Endothelial cell of umbilical vein (primary cell): ENCODE measurements at regions of chr1 and their contacts with region 1.

Region 1: DNA sequence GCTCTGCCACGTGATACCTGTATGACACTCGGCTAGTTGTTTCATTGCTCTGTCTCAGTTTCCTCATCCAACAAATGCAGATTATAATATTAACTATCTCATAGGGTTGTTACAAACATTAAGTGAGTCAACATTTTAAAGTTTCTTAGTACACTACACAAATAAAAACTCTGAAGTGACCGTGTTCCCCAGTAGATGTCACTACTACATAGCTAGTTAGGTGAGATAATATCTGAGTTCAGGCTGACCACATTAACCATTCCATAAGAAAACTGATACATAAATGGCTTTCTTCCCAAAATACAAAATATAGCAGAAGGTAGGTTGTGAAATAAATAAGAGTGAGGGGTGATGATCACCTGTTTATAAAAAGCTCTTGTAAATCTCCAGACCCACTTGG is 214.1 kb downstream of the NUF2 start:
- DNase-seq: peak; percentile 30
- H3K4me3 ChIP-seq: no peak overlapping the region
- H3K27ac ChIP-seq: no peak overlapping the region
- H3K4me1 ChIP-seq: no peaks in the 10 kb centered on the region
- H3K27me3 ChIP-seq: peaks cover 0 to 3% of the 10 kb centered on the region in 2 experiments
- CTCF ChIP-seq: no peak
- POLR2A ChIP-seq: no peak

Region 2: GRCh38 chr1:162847839-162848453 is 687.9 kb before region 1 on chr1:
- CTCF ChIA-PET with region 1: no interaction called
- POLR2A ChIA-PET with region 1: no interaction called
- dilution Hi-C with region 1: no loop called
- intact Hi-C with region 1: loop called (anchors 10 kb)
- DNase-seq: peak; percentile 78
- H3K4me3 ChIP-seq: no peak overlapping the region
- H3K27ac ChIP-seq: no peak overlapping the region
- H3K4me1 ChIP-seq: no peaks in the 10 kb centered on the region
- H3K27me3 ChIP-seq: no peaks in the 10 kb centered on the region
- CTCF ChIP-seq: peak; percentile 78 to 82
- POLR2A ChIP-seq: no peak

Region 3: DNA sequence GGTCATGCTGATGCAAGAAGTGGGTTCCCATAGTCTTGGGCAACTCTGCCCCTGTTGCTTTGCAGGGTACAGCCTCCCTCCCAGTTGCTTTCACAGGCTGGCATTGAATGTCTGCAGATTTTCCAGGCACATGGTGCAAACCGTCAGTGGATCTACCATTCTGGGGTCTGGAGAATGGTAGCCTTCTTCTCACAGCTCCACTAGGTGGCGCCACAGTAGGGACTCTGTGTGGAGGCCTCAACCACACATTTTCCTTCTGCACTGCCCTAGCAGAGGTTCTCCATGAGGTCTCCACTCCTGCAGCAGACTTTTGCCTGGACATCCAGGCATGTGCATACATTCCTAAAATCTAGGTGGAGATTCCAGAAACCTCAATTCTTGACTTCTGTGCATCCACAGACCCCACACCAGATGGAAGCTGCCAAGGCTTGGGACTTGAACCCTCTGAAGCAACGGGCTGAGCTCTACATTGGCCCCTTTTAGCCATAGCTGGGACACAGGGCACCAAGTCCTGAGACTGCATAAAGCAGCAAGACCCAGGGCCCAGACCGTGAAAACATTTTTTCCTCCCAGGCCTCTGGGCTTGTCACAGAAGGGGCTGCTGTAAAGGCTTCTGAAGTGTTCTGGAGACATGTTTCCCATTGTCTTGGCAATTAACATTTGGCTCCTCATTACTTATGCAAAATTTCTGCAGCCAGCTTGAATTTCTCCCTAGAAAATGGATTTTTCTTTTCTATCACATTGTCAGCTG is 557.0 kb after region 1 on chr1:
- CTCF ChIA-PET with region 1: no interaction called
- POLR2A ChIA-PET with region 1: no interaction called
- dilution Hi-C with region 1: no loop called
- intact Hi-C with region 1: loop called (anchors 10 kb)
- DNase-seq: no peak
- H3K4me3 ChIP-seq: no peak overlapping the region
- H3K27ac ChIP-seq: no peak overlapping the region
- H3K4me1 ChIP-seq: no peaks in the 10 kb centered on the region
- H3K27me3 ChIP-seq: no peaks in the 10 kb centered on the region
- CTCF ChIP-seq: peak; percentile 9 to 33
- POLR2A ChIP-seq: no peak